Motor neuron (in vitro differentiated cells): ENCODE measurements at regions of chr14 and their contacts with region 1.

Region 1: GRCh38 chr14:54572316-54572715 is 5.4 kb downstream of the SAMD4A start:
- ATAC-seq: no peak
- H3K4me3 ChIP-seq: no peak overlapping the region
- H3K27ac ChIP-seq: no peak overlapping the region
- H3K4me1 ChIP-seq: peaks cover 3 to 8% of the 10 kb centered on the region in 2 donors

Region 2: GRCh38 chr14:54387328-54387727 is 185.0 kb before region 1 on chr14:
- in situ Hi-C with region 1: no loop called
- ATAC-seq: no peak
- H3K4me3 ChIP-seq: no peak overlapping the region
- H3K27ac ChIP-seq: no peak overlapping the region
- H3K4me1 ChIP-seq: no peaks in the 10 kb centered on the region

Region 3: DNA sequence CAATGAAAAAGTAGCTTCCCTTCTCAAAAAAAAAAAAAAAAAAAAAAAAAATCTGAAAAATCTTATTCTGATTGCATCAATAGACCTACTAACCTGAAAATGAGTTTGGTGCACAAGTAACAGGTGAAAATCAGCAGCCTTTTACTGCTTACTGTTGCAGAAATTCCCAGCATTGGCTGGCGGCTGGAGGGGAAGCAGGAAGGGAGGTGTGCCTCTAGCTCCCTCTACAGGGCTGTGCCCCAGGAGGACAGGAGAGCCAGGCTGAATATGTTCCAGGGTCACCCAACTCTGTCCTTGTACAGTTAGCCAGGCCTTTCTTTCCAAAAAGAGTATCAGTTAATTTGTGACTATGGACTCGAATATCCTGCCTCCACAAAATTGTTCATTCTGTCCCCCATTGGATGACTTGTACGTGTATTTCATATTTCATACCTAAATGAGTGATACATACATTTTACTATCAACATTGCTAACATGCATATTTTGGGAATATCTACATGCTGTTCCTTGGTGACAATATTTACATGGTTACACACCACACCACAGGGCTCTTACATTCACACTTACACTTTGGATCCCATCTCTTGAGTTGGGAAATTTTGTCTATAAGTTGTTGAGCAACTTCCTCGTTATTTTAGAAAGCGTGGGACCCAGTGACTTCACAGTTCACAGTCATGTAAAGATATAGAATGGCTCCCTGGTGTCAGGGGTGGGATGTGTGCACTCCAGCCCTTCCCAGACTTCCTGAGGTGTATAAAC is 119.4 kb after region 1 on chr14:
- in situ Hi-C with region 1: loop called in 5 of 9 experiments (anchors 10 to 25 kb)
- ATAC-seq: peak; percentile 59 to 99 (median 88)
- H3K4me3 ChIP-seq: no peak overlapping the region
- H3K27ac ChIP-seq: no peak overlapping the region
- H3K4me1 ChIP-seq: no peaks in the 10 kb centered on the region